ENCODE measurements at regions of chr10 and their contacts with region 1.

Region 1: GRCh38 chr10:44990302-44990655 is 10.4 kb upstream of the ZNF22 start:
- DNase-seq: no peak
- CTCF ChIP-seq: peak; percentile 28

Region 2: GRCh38 chr10:44818701-44819127 is 171.6 kb before region 1 on chr10:
- CTCF ChIA-PET with region 1: no interaction called
- POLR2A ChIA-PET with region 1: no interaction called
- DNase-seq: no peak
- CTCF ChIP-seq: no peak

Region 3: DNA sequence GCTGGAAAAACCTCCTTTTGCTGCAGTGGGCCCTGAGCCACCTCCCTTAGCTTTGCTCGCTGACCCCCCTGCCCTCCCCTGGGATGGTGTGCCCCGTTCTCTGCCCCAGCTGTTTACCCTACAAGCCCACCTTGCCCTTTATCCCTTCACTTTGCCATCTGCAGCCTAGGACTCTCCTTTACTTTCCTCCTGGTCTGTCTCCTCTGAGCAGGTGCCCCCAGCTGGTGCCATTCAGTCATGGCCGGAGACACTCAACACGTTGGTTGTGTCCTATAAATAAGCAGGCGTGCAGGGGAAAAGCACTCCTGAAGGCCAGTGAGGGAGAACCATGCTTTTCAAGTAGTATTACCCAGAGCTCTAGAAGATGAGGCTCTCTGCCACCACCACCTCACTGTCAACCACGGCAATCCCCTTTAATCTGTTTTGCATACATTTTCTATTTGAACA is 24.6 kb before region 1 on chr10:
- CTCF ChIA-PET with region 1: interaction called, 12 read pairs
- POLR2A ChIA-PET with region 1: no interaction called
- DNase-seq: no peak
- CTCF ChIP-seq: no peak

Region 4: DNA sequence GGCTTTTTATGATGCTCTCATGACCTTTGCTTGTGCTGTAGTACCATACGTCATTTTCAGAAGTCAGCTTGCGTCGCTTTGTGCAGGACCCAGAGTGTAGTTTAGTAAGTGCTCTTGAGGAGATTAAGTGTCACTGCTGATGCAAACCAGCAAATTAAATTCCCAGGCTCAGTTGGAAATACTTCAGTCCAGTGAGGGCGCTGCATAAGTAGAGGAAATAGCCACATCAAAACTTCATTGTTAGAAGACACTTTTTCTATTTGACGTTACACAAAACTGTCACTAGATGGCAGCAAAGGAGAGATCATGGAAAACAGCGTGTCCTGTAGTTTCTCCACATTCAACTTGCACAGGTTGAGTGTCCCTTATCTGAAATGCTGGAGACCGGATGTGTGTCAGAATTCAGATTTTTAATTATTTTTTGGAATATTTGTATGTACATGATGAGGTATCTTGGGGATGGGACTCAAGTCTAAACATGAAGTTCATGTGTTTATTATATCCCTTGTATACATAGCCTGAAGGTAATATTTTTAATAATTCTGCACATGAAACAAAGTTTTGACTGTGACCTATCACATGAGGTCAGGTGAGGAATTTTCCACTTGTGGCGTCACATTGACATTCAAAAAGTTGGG is 18.4 kb after region 1 on chr10:
- CTCF ChIA-PET with region 1: interaction called, 10 read pairs
- POLR2A ChIA-PET with region 1: no interaction called
- DNase-seq: peak; percentile 60
- CTCF ChIP-seq: peak; percentile 64